Body of pancreas (tissue), 4 donors: ENCODE measurements at regions of chrX and their contacts with region 1.

Region 1: DNA sequence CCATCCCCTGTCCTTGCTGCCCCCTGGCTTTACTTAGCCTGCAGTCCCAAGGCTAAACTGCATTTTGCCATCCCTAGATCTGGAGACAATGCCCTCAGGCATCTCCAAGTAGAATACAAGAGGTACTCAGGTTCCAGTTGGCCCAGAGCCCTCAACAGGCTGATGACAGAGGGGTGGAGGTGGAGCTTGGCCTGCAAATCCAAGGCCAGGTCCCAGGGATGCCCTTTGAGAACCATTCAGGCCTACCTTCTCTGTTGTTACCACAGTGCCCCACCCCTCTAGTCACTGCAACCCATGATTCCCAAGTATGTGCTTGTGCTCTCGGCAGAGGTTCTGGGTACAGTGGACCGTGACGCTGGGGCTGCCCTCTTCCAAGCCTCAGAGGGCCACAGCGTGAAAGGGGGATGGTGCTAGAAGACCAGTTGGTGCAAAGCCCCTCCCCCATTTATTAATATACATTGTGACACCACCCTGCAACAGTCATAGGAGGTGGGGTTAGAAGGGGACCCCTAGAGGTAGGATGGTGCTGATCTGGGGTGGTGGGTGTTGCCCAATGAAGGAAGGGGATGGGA is 6.4 kb upstream of the UBA1 start:
- DNase-seq: peak in 2 of 4 donors; percentile 28 to 34
- ATAC-seq: no peak
- H3K4me3 ChIP-seq: no peak overlapping the region
- H3K27ac ChIP-seq: no peak overlapping the region
- H3K4me1 ChIP-seq: peaks cover 7% of the 10 kb centered on the region
- H3K27me3 ChIP-seq: no peaks in the 10 kb centered on the region
- CTCF ChIP-seq: no peak
- POLR2A ChIP-seq: no peak

Region 2: GRCh38 chrX:47373198-47373597 is 186.0 kb after region 1 on chrX:
- intact Hi-C with region 1: loop called (anchors 10 kb)
- DNase-seq: no peak
- ATAC-seq: no peak
- H3K4me3 ChIP-seq: no peak overlapping the region
- H3K27ac ChIP-seq: no peak overlapping the region
- H3K4me1 ChIP-seq: no peaks in the 10 kb centered on the region
- H3K27me3 ChIP-seq: no peaks in the 10 kb centered on the region
- CTCF ChIP-seq: no peak
- POLR2A ChIP-seq: no peak

Region 3: GRCh38 chrX:47523297-47523696 is 336.1 kb after region 1 on chrX:
- intact Hi-C with region 1: loop called (anchors 10 kb)
- DNase-seq: peak; percentile 78 to 85 (median 84)
- ATAC-seq: peak; percentile 98
- H3K4me3 ChIP-seq: no peak overlapping the region
- H3K27ac ChIP-seq: no peak overlapping the region
- H3K4me1 ChIP-seq: peaks cover 7% of the 10 kb centered on the region
- H3K27me3 ChIP-seq: no peaks in the 10 kb centered on the region
- CTCF ChIP-seq: peak; percentile 58 to 91 (median 77)
- POLR2A ChIP-seq: peak in 1 of 3 donors; percentile 19

Region 4: DNA sequence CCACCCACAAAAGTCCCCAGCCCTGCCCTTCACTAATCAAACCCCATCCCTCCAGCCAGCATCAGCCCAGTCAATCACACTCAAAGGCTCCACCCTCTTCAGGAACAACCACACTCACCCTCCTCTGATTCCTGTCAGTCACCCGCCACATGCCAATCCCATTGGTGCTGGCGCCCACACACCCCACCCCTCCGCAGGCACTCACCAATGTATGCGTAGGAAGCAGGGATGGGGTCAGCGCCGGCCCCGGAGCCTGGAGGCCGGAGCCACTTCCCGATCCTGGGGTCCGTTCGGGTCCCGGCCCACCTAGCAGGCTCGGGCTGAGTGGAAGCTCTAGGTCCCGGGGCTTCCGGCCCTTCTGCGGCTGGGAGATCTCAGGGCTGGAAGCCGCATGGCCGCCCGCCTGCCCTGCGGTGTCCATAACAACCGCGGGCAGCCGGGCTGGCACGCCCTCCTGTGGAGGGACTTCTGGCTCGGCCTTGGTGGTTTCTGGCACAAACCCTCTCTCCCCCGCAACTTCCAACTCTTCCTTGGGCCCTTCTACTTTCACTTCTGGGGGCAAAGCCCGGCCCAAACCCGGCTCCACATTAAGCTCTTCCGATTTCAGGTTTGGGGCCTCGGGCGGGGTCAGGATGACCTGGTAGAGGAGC is 450.5 kb after region 1 on chrX:
- intact Hi-C with region 1: no loop called
- DNase-seq: peak in 1 of 4 donors; percentile 28
- ATAC-seq: no peak
- H3K4me3 ChIP-seq: no peak overlapping the region
- H3K27ac ChIP-seq: no peak overlapping the region
- H3K4me1 ChIP-seq: no peaks in the 10 kb centered on the region
- H3K27me3 ChIP-seq: no peaks in the 10 kb centered on the region
- CTCF ChIP-seq: no peak
- POLR2A ChIP-seq: no peak